ENCODE measurements at regions of chr17 and their contacts with region 1.

Region 1: DNA sequence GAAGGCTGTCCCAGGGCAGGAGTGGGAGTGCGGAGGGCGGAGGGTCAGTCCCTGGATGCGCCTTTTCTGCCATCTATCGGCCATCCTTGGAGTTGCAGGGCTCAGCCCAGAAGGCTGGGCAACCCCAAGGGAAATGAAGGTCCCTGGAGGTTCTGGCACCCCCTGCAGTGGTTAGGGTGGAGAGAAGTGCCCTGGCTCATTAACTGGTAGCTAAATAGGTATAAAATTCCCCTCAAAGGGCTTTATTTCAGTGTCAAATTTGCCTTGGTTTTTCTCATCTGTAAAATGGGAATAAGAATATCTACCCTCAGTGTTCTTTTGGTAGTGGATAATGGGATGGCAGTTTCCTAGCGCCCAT is 22.4 kb downstream of the C17orf75 start:
- DNase-seq: no peak
- H3K4me3 ChIP-seq: no peak overlapping the region
- H3K27me3 ChIP-seq: peaks cover 2% of the 10 kb centered on the region; the same call in 1 of the 2 replicates
- CTCF ChIP-seq: peak; percentile 99

Region 2: DNA sequence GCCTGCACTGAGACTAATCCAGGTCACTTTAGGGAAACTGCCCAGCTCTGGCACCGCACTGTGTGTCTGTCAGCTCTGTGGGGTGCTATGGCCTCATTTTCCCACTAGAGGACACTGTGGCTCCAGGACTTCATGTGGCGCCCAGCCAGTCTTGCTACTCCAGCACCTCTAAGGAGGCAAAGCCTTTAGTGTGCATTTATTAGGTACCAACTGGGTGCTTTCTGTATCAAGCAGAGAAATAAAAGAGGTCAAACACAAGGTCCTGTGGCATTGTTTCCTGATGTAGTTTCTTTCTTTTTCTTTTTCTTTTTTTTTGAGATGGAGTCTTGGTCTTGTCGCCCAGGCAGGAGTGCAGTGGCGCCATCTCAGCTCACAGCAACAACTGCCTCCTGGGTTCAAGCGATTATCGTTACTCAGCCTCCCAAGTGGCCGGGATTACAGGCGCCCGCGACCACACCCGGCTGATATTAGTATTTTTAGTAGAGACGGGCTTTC is 66.4 kb before region 1 on chr17:
- CTCF ChIA-PET with region 1: interaction called, 110 read pairs
- POLR2A ChIA-PET with region 1: no interaction called
- DNase-seq: no peak
- H3K4me3 ChIP-seq: no peak overlapping the region
- H3K27me3 ChIP-seq: no peaks in the 10 kb centered on the region; the same call in 1 of the 2 replicates
- CTCF ChIP-seq: peak; percentile 99

Region 3: DNA sequence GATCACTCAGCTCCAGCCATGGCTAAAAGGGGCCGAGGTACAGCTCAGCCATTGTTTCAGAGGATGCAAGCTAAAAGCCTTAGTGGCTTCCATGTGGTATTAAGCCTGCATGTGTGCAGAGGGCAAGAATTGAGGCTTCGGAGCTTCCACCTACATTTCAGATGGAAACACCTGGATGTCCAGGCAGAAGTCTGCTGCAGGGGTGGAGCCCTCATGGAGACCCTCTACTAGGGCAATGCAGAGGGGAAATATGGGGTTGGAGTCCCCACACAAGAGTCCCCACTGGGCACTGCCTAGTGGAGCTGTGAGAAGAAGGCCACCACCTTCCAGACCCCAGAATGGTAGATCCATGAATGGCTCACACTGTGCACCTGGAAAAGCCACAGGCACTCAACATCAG is 110.1 kb after region 1 on chr17:
- CTCF ChIA-PET with region 1: no interaction called
- POLR2A ChIA-PET with region 1: no interaction called
- DNase-seq: no peak
- H3K4me3 ChIP-seq: no peak overlapping the region
- H3K27me3 ChIP-seq: no peaks in the 10 kb centered on the region
- CTCF ChIP-seq: no peak